Activated CD4-positive, alpha-beta T cell treated with anti-CD3 and anti-CD28 coated beads, Interleukin-2, amount 10 ng/mL, durations not matched to agents 24 days and 14 days (primary cell): ENCODE measurements at regions of chr12 and their contacts with region 1.

Region 1: GRCh38 chr12:131290255-131290959 is 336.7 kb downstream of the ADGRD1 start:
- DNase-seq: no peak
- H3K4me3 Mint-ChIP-seq: no peak overlapping the region
- H3K27ac Mint-ChIP-seq: no peak overlapping the region
- H3K4me1 Mint-ChIP-seq: no peaks in the 10 kb centered on the region
- H3K27me3 Mint-ChIP-seq: no peaks in the 10 kb centered on the region

Region 2: GRCh38 chr12:130980939-130981742 is 309.3 kb before region 1 on chr12:
- intact Hi-C with region 1: no loop called
- DNase-seq: no peak
- H3K4me3 Mint-ChIP-seq: no peak overlapping the region
- H3K27ac Mint-ChIP-seq: no peak overlapping the region
- H3K4me1 Mint-ChIP-seq: no peaks in the 10 kb centered on the region
- H3K27me3 Mint-ChIP-seq: peaks cover 16% of the 10 kb centered on the region

Region 3: GRCh38 chr12:131673888-131674257 is 383.5 kb after region 1 on chr12:
- intact Hi-C with region 1: loop called (anchors 5 kb)
- DNase-seq: no peak
- H3K4me3 Mint-ChIP-seq: no peak overlapping the region
- H3K27ac Mint-ChIP-seq: no peak overlapping the region
- H3K4me1 Mint-ChIP-seq: no peaks in the 10 kb centered on the region
- H3K27me3 Mint-ChIP-seq: peaks cover 12% of the 10 kb centered on the region